GM18951 (cell line): ENCODE measurements at regions of chr7 and their contacts with region 1.

Region 1: DNA sequence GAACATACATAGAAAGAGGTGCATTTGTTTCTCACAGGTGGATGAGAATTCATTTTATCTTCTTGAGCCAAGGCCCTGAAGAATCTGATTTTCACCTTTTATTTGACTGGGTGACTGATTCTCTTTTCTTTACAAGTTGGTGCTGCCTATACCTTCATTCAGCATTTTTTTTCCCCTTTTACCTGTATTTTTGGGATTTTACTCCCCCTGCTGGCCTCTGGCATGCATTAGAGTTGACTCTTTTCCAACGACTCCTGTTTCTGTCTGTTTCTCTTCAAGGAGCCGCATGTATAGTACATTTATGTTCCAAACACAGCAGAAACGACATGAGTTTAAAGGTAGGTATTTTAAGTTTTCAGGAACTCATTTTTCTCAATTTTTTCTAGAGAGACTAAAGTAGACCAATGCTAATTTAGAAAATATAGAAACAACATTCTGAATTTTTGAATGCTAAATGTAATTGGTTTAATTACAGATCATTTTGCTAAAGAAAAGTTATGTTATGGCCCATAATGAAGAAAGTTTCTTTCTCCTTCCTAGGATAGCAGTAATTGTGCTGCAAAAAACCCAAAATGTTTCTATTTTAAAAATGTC is 149.8 kb upstream of the HDAC9 start:
- POLR2A ChIP-seq: no peak

Region 2: DNA sequence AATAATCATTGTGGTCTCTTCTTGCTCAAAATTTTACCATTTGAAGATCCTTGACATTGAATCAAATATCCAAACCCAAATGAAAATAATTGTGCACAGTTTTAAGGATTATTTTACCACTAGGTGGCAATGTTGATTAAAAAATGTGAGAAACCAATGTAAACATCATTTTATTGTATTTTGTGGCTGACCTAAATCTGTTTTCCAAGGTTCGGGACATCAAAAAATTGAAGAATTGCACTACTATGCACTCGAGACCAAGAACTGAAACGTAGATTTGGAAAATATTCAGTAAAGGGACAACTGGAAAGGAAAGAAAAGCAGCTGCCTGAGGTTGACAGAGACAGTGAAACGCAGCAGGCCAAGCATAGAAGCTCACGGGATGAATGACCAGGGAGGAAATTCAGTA is 664.8 kb before region 1 on chr7:
- in situ Hi-C with region 1: loop called (anchors 25 kb)
- POLR2A ChIP-seq: no peak

Region 3: DNA sequence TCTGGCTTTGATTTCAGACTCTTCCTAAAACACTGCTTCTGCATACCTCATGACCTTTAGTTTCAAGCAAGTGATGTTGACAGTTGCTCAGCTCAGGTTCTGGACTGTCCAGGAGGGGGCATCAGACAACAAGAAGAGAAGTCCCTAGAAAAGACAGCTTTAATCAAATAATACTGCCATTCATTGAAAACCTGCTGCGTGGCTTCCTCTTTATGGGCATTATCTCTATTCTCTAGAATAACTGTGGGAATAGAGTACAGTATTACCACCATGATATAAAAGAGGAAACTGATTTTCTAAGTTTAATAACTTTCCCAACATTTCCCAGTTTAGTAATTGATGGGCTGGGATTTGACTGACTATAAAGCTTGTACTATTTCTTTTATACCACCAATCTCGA is 575.8 kb before region 1 on chr7:
- in situ Hi-C with region 1: loop called (anchors 25 kb)
- POLR2A ChIP-seq: no peak

Region 4: GRCh38 chr7:17871815-17872533 is 473.8 kb before region 1 on chr7:
- in situ Hi-C with region 1: no loop called
- POLR2A ChIP-seq: no peak

Region 5: DNA sequence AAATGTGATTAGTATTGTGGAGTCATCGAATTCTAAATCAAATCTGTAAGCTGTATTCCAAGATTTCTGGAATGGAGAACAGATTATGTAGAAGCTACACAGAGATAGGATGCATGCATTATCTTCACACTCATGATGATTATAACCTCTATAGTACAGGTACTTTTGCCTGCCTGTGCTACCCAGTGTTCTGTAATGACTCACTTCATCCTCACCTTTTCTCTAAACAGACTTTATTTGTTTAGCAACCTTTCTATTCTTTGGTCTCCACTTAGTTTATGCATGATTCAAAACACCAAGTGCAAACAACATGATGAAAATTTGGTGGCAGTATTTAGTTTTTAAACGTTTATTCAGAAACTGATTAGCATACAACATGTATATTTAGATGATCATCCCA is 249.7 kb before region 1 on chr7:
- in situ Hi-C with region 1: no loop called
- POLR2A ChIP-seq: no peak

Region 6: GRCh38 chr7:18212758-18213157 is 133.0 kb before region 1 on chr7:
- in situ Hi-C with region 1: loop called (anchors 25 kb)
- POLR2A ChIP-seq: no peak